ENCODE measurements at regions of chr16 and their contacts with region 1.

Region 1: GRCh38 chr16:15704545-15704987 is 54.5 kb downstream of the NDE1 start:
- DNase-seq: peak; percentile 82
- H3K4me3 ChIP-seq: no peak overlapping the region
- H3K27ac ChIP-seq: peak overlapping the region in 1 of 8 donors; percentile 16
- H3K4me1 ChIP-seq: peaks cover 0 to 18% (median 6%) of the 10 kb centered on the region in 6 donors
- H3K27me3 ChIP-seq: no peaks in the 10 kb centered on the region
- CTCF ChIP-seq: peak; percentile 59 to 90 (median 80)
- POLR2A ChIP-seq: no peak

Region 2: DNA sequence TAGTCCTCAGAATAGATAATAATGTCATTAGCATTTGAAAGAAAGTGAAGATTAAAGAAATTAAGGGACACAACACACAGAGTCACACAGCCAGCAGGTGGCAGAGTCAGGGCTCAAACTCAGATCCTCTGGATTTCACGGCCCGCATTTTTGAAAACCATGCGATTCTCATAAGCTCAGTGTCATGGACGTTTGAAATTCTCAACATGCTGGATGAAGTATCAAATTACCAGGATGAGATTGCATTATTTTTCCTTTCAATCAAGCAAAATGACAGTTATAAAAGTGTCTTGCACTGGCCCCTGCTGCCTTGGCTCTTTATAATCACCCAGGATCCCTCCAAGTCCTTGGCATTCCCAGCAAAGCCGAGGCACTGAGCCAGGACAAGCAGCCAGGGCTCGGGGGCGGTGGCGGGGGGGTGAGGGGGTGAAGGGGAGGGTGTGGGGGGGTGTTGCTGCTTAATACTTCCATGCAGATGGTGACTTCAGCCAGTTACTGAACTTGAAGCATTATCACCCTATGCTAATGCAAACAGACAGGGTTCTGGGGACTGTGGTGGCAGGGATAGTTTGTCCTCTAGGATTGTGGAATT is 276.8 kb before region 1 on chr16:
- intact Hi-C with region 1: loop called (anchors 5 kb)
- DNase-seq: peak; percentile 81
- H3K4me3 ChIP-seq: no peak overlapping the region
- H3K27ac ChIP-seq: peak overlapping the region in 1 of 8 donors; percentile 22
- H3K4me1 ChIP-seq: peaks cover 0 to 9% (median 0%) of the 10 kb centered on the region in 6 donors
- H3K27me3 ChIP-seq: no peaks in the 10 kb centered on the region
- CTCF ChIP-seq: peak; percentile 16 to 79 (median 62)
- POLR2A ChIP-seq: no peak